ENCODE measurements at regions of chr7 and their contacts with region 1.

Region 1: DNA sequence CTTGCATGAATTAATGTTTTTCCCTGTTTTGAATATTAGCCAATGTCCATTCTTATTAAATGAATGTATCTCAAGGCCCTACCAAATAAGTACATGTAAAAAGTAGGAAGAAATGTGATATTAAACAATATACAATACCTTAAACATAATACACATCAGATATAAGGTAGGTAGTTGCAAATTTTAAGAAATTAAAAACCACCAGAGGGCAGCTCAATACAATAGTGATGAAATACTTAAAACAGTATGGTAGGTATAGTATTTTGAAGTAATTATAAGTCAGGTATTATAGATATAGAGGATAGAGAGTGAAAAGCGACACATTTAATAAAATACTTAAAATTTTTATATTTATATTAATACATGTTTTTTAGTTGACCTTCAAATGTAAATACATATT is 43.6 kb upstream of the CDK14 start:
- DNase-seq: no peak
- ATAC-seq: no peak
- H3K4me3 ChIP-seq: no peak overlapping the region
- H3K27ac ChIP-seq: no peak overlapping the region
- H3K4me1 ChIP-seq: no peaks in the 10 kb centered on the region
- H3K27me3 ChIP-seq: no peaks in the 10 kb centered on the region
- CTCF ChIP-seq: 0 out of 6 replicates have a peak, but pooled peaks of 1 of the 3 experiments have one; percentile 9
- EP300 ChIP-seq: no peak
- POLR2A ChIP-seq: no peak
- RAD21 ChIP-seq: no peak; a peak in 1 of 4 replicates

Region 2: GRCh38 chr7:90629297-90629918 is 76.9 kb after region 1 on chr7:
- CTCF ChIA-PET with region 1: interaction called, 3 read pairs
- POLR2A ChIA-PET with region 1: no interaction called
- in situ Hi-C with region 1: no loop called
- intact Hi-C with region 1: loop called (anchors 1 kb)
- DNase-seq: peak in 3 of 4 experiments; percentile 16 to 43 (median 37)
- ATAC-seq: peak; percentile 92
- H3K4me3 ChIP-seq: no peak overlapping the region
- H3K27ac ChIP-seq: no peak overlapping the region
- H3K4me1 ChIP-seq: no peaks in the 10 kb centered on the region
- H3K27me3 ChIP-seq: no peaks in the 10 kb centered on the region
- CTCF ChIP-seq: peak; percentile 34 to 69 (median 59); a peak in 4 of 6 replicates
- EP300 ChIP-seq: no peak
- POLR2A ChIP-seq: no peak
- RAD21 ChIP-seq: peak in 1 of 2 experiments; percentile 26; a peak in 1 of 4 replicates

Region 3: GRCh38 chr7:91034459-91035368 is 482.2 kb after region 1 on chr7:
- CTCF ChIA-PET with region 1: no interaction called
- POLR2A ChIA-PET with region 1: no interaction called
- in situ Hi-C with region 1: no loop called
- intact Hi-C with region 1: loop called (anchors 5 kb)
- DNase-seq: peak; percentile 32 to 50 (median 46)
- ATAC-seq: peak; percentile 75
- H3K4me3 ChIP-seq: no peak overlapping the region
- H3K27ac ChIP-seq: no peak overlapping the region
- H3K4me1 ChIP-seq: no peaks in the 10 kb centered on the region
- H3K27me3 ChIP-seq: no peaks in the 10 kb centered on the region
- CTCF ChIP-seq: peak; percentile 48 to 55 (median 52)
- EP300 ChIP-seq: no peak
- POLR2A ChIP-seq: no peak
- RAD21 ChIP-seq: peak; percentile 34 to 57

Measured in K562 (cell line).